Caki2 (cell line): ENCODE measurements at regions of chr12 and their contacts with region 1.

Region 1: DNA sequence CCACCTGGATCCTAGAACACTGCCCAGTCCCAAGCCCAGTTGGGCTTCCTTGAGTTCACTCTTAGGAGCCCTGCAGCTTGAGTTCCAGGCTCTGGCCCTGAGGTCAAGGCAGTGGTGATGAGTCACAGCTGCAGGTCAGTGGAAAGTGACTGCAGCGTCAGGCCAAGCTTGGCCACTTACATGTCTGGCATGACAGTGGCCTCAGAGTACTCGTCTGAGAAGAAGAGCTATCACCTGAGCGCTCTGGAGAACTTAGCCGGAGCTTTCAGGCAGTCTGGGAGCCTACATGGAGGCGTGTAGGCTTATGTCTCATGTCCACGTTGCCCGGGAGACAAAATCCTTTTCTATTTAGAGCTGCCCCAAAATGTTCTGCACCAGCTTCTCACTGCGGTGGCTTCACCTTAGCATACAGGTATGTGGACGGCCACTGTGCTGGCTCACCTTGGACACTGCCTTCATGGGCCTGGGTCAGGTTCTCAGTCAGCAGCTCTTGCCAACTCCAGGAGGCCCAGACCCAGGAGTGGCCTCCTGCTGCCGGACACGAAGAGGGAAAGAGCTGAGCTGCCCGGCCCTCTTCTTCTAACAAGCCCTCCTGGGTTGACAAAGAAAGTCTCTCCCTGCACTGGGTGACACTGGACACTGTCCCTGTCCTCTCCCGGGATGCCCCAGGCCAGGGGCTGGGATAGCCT is 75.7 kb downstream of the ARL6IP4 start:
- DNase-seq: peak; percentile 64

Region 2: GRCh38 chr12:122974274-122974891 is 81.8 kb before region 1 on chr12:
- in situ Hi-C with region 1: no loop called
- DNase-seq: peak; percentile 94

Region 3: GRCh38 chr12:123131879-123132452 is 75.8 kb after region 1 on chr12:
- in situ Hi-C with region 1: loop called (anchors 5 kb)
- DNase-seq: no peak